ENCODE measurements at regions of chr11 and their contacts with region 1.

Region 1: DNA sequence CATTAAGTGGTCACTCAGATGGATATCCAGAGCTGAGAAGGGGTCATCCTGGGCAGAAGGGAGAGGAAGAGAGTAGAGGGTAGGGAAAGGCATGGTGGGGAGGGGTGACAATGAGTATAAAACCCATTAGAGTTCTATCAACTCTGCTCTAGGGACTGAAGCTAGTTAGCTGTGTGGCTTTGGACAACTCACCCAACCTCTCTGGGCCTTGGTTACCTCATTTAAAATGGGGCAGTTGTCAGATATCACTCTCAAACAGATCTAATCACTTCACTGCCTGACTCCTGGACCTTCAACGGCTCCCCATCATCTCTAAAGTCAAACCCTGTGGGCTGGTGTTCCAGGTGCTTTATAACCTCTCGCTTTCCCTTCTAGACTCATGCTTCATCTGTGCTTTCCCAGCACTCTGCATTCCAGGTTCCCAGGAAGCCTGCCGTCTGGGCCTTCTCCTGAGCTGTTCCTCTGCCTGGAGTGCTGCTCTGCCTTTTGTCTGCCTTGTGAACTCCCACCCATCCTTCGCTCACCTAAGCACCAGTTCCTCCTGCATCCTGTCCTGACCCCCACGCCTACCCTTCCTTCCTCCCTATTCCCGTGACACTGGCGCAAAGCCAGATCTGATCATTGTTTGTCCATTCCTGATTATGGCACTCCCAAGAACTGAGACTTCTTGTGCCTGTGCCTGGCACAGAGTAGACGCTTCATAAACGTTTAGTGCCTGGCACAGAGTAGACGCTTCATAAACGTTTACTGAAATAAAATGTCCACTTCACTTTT is 22.3 kb upstream of the KCNJ11 start:
- DNase-seq: no peak
- ATAC-seq: no peak
- H3K4me3 ChIP-seq: no peak overlapping the region
- H3K27ac ChIP-seq: no peak overlapping the region
- H3K4me1 ChIP-seq: no peaks in the 10 kb centered on the region
- H3K27me3 ChIP-seq: peaks cover 8% of the 10 kb centered on the region
- CTCF ChIP-seq: no peak
- POLR2A ChIP-seq: no peak
- RAD21 ChIP-seq: no peak

Region 2: DNA sequence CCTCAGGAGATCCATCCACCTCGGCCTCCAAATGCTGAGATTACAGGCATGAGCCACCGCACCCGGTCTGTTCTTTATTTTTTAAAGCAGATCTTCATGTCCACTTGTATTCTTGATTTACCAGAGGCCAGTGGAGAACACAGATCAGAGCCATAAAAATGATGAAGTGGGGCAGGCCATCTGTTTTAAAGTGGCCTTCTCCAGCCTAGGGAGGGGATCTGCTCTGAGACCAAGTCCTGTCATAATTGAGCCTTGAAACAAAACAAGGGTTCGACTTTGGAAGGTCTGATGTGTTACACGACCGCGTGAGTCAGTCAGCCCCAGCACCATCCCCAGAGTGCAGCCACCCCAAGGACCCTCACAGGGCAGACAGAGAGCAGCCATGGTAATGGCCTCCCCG is 38.4 kb after region 1 on chr11:
- CTCF ChIA-PET with region 1: no interaction called
- POLR2A ChIA-PET with region 1: no interaction called
- dilution Hi-C with region 1: no loop called
- in situ Hi-C with region 1: no loop called
- intact Hi-C with region 1: loop called (anchors 1 kb)
- DNase-seq: no peak
- ATAC-seq: no peak
- H3K4me3 ChIP-seq: no peak overlapping the region
- H3K27ac ChIP-seq: no peak overlapping the region
- H3K4me1 ChIP-seq: no peaks in the 10 kb centered on the region
- H3K27me3 ChIP-seq: peaks cover 3% of the 10 kb centered on the region
- CTCF ChIP-seq: no peak
- POLR2A ChIP-seq: no peak
- RAD21 ChIP-seq: no peak